ENCODE measurements at regions of chr4 and their contacts with region 1.

Region 1: DNA sequence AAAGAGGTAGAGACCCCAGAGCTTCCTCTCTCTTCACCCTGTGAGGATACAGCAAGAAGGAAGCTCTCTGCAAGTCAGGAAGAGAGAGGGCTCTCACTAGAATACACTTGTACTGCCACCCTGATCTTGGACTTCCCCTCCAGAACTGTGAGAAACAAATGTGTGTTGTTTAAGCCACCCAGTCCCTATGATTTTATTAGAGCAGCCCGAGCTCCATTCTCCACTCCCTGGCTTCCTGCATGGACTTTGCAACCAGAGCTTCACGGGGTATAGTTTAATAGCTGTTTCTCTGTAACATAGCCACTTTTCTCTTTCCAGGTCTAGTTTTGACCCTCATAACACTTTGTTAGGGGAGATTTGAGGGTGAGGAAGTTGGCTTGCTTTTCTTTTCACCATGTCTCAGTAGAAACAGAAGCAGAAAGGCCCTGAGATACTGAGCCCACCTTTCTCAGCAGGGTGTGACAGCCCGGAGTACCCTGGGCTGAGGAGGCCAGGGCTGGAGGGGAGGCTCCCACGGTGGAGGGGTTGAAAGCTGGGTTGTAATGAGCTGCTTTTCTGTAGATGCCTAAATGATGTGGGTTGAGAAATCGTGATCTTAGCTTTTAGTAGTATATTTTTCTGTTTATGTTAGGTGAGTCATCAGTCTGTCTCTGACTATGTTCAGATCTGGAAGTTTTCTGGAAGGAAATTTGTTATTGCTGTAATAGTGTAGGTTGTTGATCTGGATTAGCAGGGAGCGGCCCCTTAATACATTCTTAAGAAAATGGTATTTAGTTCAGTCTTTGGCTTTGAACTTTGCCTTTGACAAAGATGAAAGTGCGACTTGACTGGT is 118.6 kb downstream of the PTTG2 start:
- DNase-seq: no peak
- ATAC-seq: no peak
- H3K4me3 ChIP-seq: no peak overlapping the region
- H3K27ac ChIP-seq: no peak overlapping the region
- H3K4me1 ChIP-seq: no peaks in the 10 kb centered on the region
- H3K27me3 ChIP-seq: no peaks in the 10 kb centered on the region
- CTCF ChIP-seq: no peak

Region 2: DNA sequence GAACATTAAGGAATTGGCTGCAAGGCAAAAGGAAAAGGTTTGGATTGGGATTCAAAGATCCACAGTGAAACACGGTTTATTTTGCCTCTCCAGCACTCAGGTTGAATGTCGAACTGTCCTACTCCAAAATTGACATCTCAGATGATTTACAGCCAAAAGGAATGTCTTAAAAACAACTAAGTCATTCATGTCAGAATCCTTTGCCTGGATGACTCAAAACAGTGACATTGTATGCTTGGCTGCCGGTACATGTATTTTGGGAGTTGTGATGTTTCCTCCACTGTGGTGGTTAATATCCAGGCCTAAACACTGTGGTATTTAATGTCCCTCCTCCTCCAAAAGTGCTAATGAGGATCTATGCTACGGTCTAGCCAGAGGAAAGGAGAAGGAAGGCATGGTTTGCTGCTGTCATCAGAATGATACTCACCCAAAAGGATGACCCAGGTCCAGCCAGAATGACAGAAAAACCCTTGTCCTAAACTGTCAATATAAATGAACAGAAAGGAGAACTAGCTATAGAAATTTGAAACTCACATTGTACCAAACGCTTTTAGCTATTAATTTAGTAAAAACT is 231.4 kb before region 1 on chr4:
- CTCF ChIA-PET with region 1: no interaction called
- POLR2A ChIA-PET with region 1: no interaction called
- in situ Hi-C with region 1: no loop called
- intact Hi-C with region 1: no loop called
- DNase-seq: no peak
- ATAC-seq: no peak
- H3K4me3 ChIP-seq: no peak overlapping the region
- H3K27ac ChIP-seq: no peak overlapping the region
- H3K4me1 ChIP-seq: no peaks in the 10 kb centered on the region
- H3K27me3 ChIP-seq: no peaks in the 10 kb centered on the region
- CTCF ChIP-seq: no peak

Region 3: DNA sequence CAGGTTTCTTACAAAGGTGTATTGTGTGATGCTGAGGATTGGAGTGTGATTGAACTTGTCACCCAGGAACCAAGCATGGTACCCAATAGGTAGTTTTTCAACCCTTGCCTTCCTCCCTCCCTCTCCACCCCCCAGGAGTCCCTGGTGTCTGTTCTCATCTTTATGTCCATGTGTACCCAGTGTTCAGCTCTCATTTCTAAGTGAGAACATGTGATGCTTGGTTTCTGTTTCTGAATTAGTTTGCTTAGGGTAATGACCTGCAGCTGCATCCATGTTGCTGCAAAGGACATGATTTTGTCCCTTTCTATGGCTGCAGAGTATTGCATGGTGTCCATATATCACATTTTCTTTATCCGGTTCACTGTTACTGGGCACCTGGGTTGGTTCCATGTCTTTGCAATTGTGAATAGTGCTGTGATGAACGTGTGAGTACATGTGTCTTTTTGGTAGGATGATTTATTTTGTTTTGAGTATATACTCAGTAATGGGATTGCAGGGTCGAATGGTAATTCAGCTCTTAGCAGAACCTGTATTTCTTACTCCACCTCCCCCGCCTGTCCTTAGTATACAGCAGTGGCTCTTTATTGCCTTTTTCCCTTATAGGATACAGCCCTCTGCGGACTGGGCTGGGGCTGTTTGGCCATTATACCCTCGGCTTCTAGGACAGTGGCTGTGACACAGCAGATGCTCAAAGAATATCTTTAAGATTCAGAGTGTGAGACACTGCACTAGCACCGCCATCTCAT is 26.8 kb after region 1 on chr4:
- CTCF ChIA-PET with region 1: no interaction called
- POLR2A ChIA-PET with region 1: no interaction called
- in situ Hi-C with region 1: no loop called
- intact Hi-C with region 1: no loop called
- DNase-seq: no peak
- ATAC-seq: no peak
- H3K4me3 ChIP-seq: no peak overlapping the region
- H3K27ac ChIP-seq: no peak overlapping the region
- H3K4me1 ChIP-seq: no peaks in the 10 kb centered on the region
- H3K27me3 ChIP-seq: no peaks in the 10 kb centered on the region
- CTCF ChIP-seq: no peak

Region 4: GRCh38 chr4:38179690-38180377 is 101.0 kb after region 1 on chr4:
- CTCF ChIA-PET with region 1: no interaction called
- POLR2A ChIA-PET with region 1: no interaction called
- in situ Hi-C with region 1: no loop called
- intact Hi-C with region 1: loop called (anchors 10 kb)
- DNase-seq: no peak
- ATAC-seq: peak; percentile 90
- H3K4me3 ChIP-seq: no peak overlapping the region
- H3K27ac ChIP-seq: no peak overlapping the region
- H3K4me1 ChIP-seq: no peaks in the 10 kb centered on the region
- H3K27me3 ChIP-seq: no peaks in the 10 kb centered on the region
- CTCF ChIP-seq: peak; percentile 86